Activated T-helper 2 cell treated with anti-CD3 and anti-CD28 coated beads, Interferon-gamma antibody, Interleukin-2, Interleukin-4, amounts not matched to agents 10 μg/mL and 5 μg/mL and 100 μg/mL, durations not matched to agents 14 hours and 24 hours and 36 hours (primary cell): ENCODE measurements at regions of chr3 and their contacts with region 1.

Region 1: DNA sequence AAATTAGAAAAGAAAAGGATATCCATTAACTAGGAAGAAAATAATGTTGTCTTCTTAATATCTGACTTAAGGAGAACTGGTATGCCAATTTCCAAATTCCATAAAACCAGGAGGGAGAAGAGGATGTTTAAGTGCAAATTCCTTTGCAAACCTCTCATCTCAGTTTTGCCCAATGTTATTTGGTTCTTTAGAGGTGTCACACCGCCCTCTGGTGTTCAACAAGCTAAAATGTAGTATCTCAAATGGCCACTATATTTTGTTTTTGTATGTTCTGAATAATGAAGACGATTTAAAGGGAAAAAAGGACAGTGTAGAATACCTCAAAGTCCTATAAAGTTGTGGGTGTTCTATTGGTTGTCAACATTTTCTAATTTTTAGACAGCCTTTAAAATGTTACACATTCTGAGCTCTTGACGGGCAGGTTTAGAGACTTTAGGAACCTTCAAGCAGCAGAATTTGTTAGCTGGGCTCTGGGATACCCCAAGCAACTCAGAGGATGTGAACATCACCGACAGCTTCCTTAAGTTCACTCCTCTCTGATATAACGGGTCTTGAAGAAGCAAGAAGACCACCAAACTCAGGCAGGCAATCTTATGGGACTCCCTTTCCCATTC is 458.3 kb downstream of the MFSD1 start:
- DNase-seq: no peak
- H3K4me3 Mint-ChIP-seq: no peak overlapping the region
- H3K27ac Mint-ChIP-seq: no peak overlapping the region
- H3K4me1 Mint-ChIP-seq: no peaks in the 10 kb centered on the region
- H3K27me3 Mint-ChIP-seq: peaks cover 4% of the 10 kb centered on the region

Region 2: DNA sequence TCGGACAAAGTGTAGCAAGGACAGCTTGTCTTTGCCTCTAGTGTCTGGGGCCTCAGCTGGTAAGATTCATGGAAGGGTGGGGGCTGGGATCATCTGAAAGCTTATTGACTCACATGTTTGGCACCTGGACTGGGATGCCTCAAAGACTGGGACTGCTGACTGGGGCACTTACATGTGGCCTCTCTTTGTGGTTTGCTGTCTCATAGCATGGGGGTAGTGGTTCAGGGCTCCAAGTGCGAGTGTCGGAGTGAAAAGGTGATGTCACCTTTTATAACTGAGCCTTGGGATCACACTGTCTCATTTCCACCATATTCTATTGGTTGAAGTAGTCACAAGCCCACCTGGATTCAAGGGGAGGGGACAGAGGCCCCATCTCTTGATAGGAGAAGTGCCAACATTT is 451.5 kb before region 1 on chr3:
- intact Hi-C with region 1: no loop called
- DNase-seq: no peak
- H3K4me3 Mint-ChIP-seq: no peak overlapping the region
- H3K27ac Mint-ChIP-seq: no peak overlapping the region
- H3K4me1 Mint-ChIP-seq: peaks cover 21% of the 10 kb centered on the region
- H3K27me3 Mint-ChIP-seq: no peaks in the 10 kb centered on the region

Region 3: GRCh38 chr3:158845765-158846350 is 414.3 kb before region 1 on chr3:
- intact Hi-C with region 1: loop called (anchors 1 kb)
- DNase-seq: no peak
- H3K4me3 Mint-ChIP-seq: no peak overlapping the region
- H3K27ac Mint-ChIP-seq: no peak overlapping the region
- H3K4me1 Mint-ChIP-seq: peaks cover 8% of the 10 kb centered on the region
- H3K27me3 Mint-ChIP-seq: no peaks in the 10 kb centered on the region

Region 4: GRCh38 chr3:158918008-158918407 is 342.1 kb before region 1 on chr3:
- intact Hi-C with region 1: loop called (anchors 1 kb)
- DNase-seq: no peak
- H3K4me3 Mint-ChIP-seq: no peak overlapping the region
- H3K27ac Mint-ChIP-seq: no peak overlapping the region
- H3K4me1 Mint-ChIP-seq: no peaks in the 10 kb centered on the region
- H3K27me3 Mint-ChIP-seq: no peaks in the 10 kb centered on the region

Region 5: GRCh38 chr3:159128628-159129027 is 131.5 kb before region 1 on chr3:
- intact Hi-C with region 1: loop called (anchors 10 kb)
- DNase-seq: no peak
- H3K4me3 Mint-ChIP-seq: no peak overlapping the region
- H3K27ac Mint-ChIP-seq: no peak overlapping the region
- H3K4me1 Mint-ChIP-seq: no peaks in the 10 kb centered on the region
- H3K27me3 Mint-ChIP-seq: no peaks in the 10 kb centered on the region

Region 6: GRCh38 chr3:159200176-159200575 is 60.0 kb before region 1 on chr3:
- intact Hi-C with region 1: no loop called
- DNase-seq: no peak
- H3K4me3 Mint-ChIP-seq: no peak overlapping the region
- H3K27ac Mint-ChIP-seq: no peak overlapping the region
- H3K4me1 Mint-ChIP-seq: no peaks in the 10 kb centered on the region
- H3K27me3 Mint-ChIP-seq: no peaks in the 10 kb centered on the region

Region 7: DNA sequence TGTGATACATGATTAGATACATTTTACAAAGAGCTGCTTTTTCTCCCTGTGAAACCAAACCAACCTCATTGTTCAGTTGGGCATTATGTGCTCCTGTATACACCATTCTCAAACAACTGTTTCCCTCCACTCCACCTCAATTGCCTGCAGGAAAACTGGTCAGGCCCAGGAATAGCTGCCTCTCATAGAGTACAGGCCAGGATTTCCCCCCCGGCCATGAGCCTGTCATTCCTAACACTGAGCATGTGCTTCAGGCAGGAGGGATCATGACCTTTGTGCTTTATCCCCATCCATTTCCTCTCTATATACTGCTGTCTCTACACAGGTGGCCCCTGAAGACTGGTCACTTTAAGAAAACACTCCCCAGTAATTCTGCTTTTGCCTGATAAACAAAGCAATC is 102.3 kb after region 1 on chr3:
- intact Hi-C with region 1: no loop called
- DNase-seq: no peak
- H3K4me3 Mint-ChIP-seq: no peak overlapping the region
- H3K27ac Mint-ChIP-seq: no peak overlapping the region
- H3K4me1 Mint-ChIP-seq: no peaks in the 10 kb centered on the region
- H3K27me3 Mint-ChIP-seq: no peaks in the 10 kb centered on the region

Region 8: GRCh38 chr3:159804726-159805410 is 544.7 kb after region 1 on chr3:
- intact Hi-C with region 1: loop called (anchors 1 kb)
- DNase-seq: peak; percentile 14
- H3K4me3 Mint-ChIP-seq: no peak overlapping the region
- H3K27ac Mint-ChIP-seq: no peak overlapping the region
- H3K4me1 Mint-ChIP-seq: no peaks in the 10 kb centered on the region
- H3K27me3 Mint-ChIP-seq: peaks cover 10% of the 10 kb centered on the region